CD4-positive, alpha-beta T cell (primary cell): ENCODE measurements at regions of chr6 and their contacts with region 1.

Region 1: DNA sequence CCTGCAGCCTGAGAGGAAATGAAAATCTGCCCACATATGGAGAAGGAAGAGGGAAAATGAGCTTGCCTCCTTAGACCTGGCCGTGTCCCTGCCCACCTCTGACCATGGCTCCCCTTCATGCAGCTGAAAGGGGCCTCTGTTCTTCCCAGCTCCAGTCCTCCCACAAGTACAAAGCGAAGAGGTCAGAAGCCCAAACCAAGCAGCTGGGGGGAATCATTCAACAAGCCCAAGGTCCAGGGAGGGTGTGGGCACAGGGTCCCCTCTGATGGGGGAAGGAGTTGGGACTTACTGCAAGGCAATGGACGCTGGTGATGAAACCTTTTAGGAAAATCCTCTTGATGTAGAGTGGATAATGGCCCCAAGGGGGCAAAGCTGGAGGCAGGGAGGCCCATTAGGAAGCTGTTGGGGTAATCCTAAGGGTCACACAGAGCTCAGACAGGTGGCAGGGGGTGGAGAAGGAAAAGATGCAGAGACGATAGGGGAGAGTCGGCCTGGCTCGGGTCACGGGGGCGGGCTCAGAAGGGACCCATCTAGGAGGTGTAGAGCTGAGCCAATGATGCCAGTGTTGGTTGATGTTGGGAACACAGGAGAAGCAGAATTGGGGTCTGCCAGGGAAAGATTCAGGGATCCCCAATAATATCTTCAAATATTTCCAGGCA is 16.1 kb upstream of the GRM4 start:
- DNase-seq: no peak
- ATAC-seq: no peak
- H3K4me3 ChIP-seq: no peak overlapping the region
- H3K4me3 Mint-ChIP-seq: no peak overlapping the region
- H3K27ac ChIP-seq: no peak overlapping the region
- H3K27ac Mint-ChIP-seq: no peak overlapping the region
- H3K4me1 ChIP-seq: peaks cover 3% of the 10 kb centered on the region
- H3K4me1 Mint-ChIP-seq: no peaks in the 10 kb centered on the region
- H3K27me3 ChIP-seq: no peaks in the 10 kb centered on the region
- H3K27me3 Mint-ChIP-seq: no peaks in the 10 kb centered on the region
- CTCF ChIP-seq: no peak

Region 2: DNA sequence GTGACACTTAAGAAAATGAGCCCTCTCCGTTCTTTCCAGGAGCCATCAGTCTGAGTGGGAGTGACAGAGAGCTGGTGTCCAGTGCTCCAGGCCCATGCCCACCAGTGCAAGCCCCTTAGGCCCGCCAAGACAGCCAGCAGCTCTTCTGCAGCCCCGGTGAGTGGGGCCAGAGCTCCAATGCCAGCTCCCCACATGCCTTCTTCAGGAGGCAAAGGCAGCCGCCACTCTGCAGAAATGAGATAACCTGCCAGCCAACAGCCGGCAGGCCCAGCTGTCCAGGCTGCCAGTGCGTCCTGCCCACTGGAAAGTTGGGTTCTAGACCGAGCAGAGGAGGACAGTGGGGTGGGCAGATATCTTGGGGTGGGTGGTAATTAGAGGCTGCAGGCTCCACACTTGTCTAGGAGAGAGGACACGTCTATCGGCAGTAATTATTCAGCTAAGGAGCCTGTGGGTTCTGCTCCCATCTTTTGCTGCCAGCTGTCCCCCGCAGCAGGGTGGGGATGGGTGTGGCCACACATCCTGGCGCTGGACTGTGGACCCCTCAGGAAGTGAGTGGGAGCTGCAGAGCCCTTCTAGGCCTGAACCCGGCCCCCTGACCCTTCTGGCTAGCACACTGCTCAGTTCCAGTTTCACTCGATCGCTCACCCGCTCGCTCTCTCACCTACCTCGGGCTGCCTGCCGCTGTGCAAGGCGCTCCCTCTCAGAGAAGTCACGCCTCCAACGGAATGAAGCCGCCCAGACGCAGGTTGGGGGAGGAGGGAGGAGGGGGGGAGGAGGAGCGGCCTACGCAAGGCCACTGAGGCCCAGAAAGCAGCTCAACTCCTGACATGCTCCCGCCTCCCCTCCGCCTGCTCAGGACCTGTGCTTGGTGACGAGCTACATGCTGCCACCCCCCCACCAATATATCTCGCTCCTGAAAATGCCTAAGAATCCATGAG is 19.7 kb before region 1 on chr6:
- CTCF ChIA-PET with region 1: no interaction called
- POLR2A ChIA-PET with region 1: no interaction called
- intact Hi-C with region 1: no loop called
- DNase-seq: no peak
- ATAC-seq: no peak
- H3K4me3 ChIP-seq: no peak overlapping the region
- H3K4me3 Mint-ChIP-seq: no peak overlapping the region
- H3K27ac ChIP-seq: no peak overlapping the region
- H3K27ac Mint-ChIP-seq: no peak overlapping the region
- H3K4me1 ChIP-seq: peaks cover 38% of the 10 kb centered on the region
- H3K4me1 Mint-ChIP-seq: peaks cover 23% of the 10 kb centered on the region
- H3K27me3 ChIP-seq: peaks cover 72 to 77% of the 10 kb centered on the region in 2 experiments
- H3K27me3 Mint-ChIP-seq: peaks cover 81% of the 10 kb centered on the region
- CTCF ChIP-seq: no peak

Region 3: GRCh38 chr6:34182751-34183531 is 21.0 kb after region 1 on chr6:
- CTCF ChIA-PET with region 1: interaction called, 11 read pairs
- POLR2A ChIA-PET with region 1: interaction called, 3 read pairs
- intact Hi-C with region 1: no loop called
- DNase-seq: peak; percentile 43 to 93 (median 63)
- ATAC-seq: peak; percentile 94
- H3K4me3 ChIP-seq: peak overlapping the region; percentile 13
- H3K4me3 Mint-ChIP-seq: peak overlapping the region; percentile 39
- H3K27ac ChIP-seq: peak overlapping the region; percentile 58 to 61
- H3K27ac Mint-ChIP-seq: peak overlapping the region; percentile 74
- H3K4me1 ChIP-seq: peaks cover 39% of the 10 kb centered on the region
- H3K4me1 Mint-ChIP-seq: peaks cover 31% of the 10 kb centered on the region
- H3K27me3 ChIP-seq: no peaks in the 10 kb centered on the region
- H3K27me3 Mint-ChIP-seq: no peaks in the 10 kb centered on the region
- CTCF ChIP-seq: no peak

Region 4: GRCh38 chr6:34189806-34190503 is 28.0 kb after region 1 on chr6:
- CTCF ChIA-PET with region 1: interaction called, 9 read pairs
- POLR2A ChIA-PET with region 1: no interaction called
- intact Hi-C with region 1: loop called (anchors 1 to 2 kb)
- DNase-seq: peak; percentile 43 to 84 (median 62)
- ATAC-seq: peak; percentile 89
- H3K4me3 ChIP-seq: no peak overlapping the region
- H3K4me3 Mint-ChIP-seq: no peak overlapping the region
- H3K27ac ChIP-seq: no peak overlapping the region
- H3K27ac Mint-ChIP-seq: peak overlapping the region; percentile 11
- H3K4me1 ChIP-seq: peaks cover 12% of the 10 kb centered on the region
- H3K4me1 Mint-ChIP-seq: peaks cover 15% of the 10 kb centered on the region
- H3K27me3 ChIP-seq: no peaks in the 10 kb centered on the region
- H3K27me3 Mint-ChIP-seq: no peaks in the 10 kb centered on the region
- CTCF ChIP-seq: no peak

Region 5: DNA sequence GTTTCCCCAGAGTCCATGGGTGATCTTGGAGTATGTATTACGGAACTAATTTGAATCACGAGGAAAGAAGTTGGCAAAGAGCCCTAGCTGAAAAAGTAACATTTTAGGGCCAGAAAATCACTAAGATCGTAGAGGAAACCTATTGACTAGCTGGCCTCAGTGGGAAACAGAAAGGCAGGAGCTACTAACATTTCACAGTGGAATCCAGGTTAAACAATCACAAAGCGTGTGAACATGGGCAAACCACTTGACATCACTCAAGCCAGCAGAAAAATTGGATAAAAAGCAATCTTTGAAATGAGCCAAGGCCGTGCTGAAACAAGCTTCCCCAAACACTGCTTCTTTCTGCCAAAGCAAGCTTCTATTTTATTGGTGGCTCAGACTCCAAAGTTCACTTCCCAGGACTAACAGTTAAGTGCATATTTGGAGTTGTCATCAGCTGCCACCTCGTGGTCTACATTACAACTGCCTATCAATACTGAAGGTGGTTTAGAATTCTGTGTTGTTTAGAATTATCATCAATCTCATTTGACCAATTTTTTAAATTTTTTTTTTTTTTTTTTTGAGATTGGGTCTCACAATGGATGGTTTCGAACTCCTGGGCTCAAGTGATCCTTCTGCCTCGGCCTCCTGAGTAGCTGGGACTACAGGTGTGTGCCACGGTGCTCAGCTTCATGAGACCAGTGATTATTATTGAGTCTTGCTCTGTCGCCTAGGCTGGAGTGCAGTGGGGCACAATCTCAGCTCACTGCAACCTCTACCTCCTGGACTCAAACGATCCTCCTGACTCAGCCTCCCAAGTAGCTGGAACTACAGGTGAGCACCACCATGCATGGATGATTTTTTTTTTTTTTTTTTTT is 253.2 kb after region 1 on chr6:
- CTCF ChIA-PET with region 1: interaction called, 11 read pairs
- POLR2A ChIA-PET with region 1: no interaction called
- intact Hi-C with region 1: loop called in 1 of 2 experiments (anchors 2 kb)
- DNase-seq: peak in 10 of 14 experiments; percentile 9 to 76 (median 38)
- ATAC-seq: peak; percentile 85
- H3K4me3 ChIP-seq: no peak overlapping the region
- H3K4me3 Mint-ChIP-seq: no peak overlapping the region
- H3K27ac ChIP-seq: no peak overlapping the region
- H3K27ac Mint-ChIP-seq: peak overlapping the region; percentile 38
- H3K4me1 ChIP-seq: no peaks in the 10 kb centered on the region
- H3K4me1 Mint-ChIP-seq: peaks cover 22% of the 10 kb centered on the region
- H3K27me3 ChIP-seq: no peaks in the 10 kb centered on the region
- H3K27me3 Mint-ChIP-seq: no peaks in the 10 kb centered on the region
- CTCF ChIP-seq: peak; percentile 64

Region 6: DNA sequence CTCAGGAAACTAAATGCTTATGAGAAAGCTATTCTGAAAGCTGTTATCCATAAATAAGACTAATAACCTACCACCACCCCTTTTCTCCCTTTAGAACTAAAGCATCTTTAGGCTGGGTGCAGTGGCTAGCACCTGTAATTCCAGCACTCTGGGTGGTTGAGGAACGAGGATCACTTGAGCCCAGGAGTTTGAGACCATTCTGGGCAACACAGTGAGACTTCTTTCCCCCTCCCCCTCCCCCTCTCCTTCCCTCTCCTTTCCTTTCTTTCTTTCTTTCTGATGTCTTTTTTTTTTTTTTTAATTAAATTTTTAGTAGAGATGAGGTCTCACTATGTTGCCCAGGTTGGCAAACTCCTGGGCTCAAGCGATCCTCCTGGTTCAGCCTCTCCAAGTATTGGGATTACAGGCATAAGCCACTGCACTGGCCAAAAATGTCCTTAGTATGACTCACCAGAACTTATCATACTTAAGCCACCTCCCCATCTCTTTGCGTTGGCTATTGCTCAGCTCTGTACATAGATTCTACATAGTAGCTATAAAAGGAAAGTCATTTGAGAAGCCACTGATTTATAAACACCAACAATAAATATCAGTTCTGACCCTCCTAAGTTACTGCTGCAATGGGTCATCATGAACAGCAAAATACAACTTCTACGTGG is 449.0 kb after region 1 on chr6:
- CTCF ChIA-PET with region 1: interaction called, 6 read pairs
- POLR2A ChIA-PET with region 1: no interaction called
- intact Hi-C with region 1: loop called (anchors 1 to 2 kb)
- DNase-seq: no peak
- ATAC-seq: no peak
- H3K4me3 ChIP-seq: no peak overlapping the region
- H3K4me3 Mint-ChIP-seq: no peak overlapping the region
- H3K27ac ChIP-seq: no peak overlapping the region
- H3K27ac Mint-ChIP-seq: no peak overlapping the region
- H3K4me1 ChIP-seq: peaks cover 2% of the 10 kb centered on the region
- H3K4me1 Mint-ChIP-seq: peaks cover 23% of the 10 kb centered on the region
- H3K27me3 ChIP-seq: no peaks in the 10 kb centered on the region
- H3K27me3 Mint-ChIP-seq: no peaks in the 10 kb centered on the region
- CTCF ChIP-seq: no peak